GM10248 (cell line): ENCODE measurements at regions of chr10 and their contacts with region 1.

Region 1: GRCh38 chr10:100878291-100878910 is 34.4 kb upstream of the SLF2 start:
- DNase-seq: peak; percentile 68
- CTCF ChIP-seq: peak; percentile 59

Region 2: GRCh38 chr10:100864978-100865377 is 13.4 kb before region 1 on chr10:
- CTCF ChIA-PET with region 1: no interaction called
- POLR2A ChIA-PET with region 1: no interaction called
- DNase-seq: no peak
- CTCF ChIP-seq: no peak

Region 3: DNA sequence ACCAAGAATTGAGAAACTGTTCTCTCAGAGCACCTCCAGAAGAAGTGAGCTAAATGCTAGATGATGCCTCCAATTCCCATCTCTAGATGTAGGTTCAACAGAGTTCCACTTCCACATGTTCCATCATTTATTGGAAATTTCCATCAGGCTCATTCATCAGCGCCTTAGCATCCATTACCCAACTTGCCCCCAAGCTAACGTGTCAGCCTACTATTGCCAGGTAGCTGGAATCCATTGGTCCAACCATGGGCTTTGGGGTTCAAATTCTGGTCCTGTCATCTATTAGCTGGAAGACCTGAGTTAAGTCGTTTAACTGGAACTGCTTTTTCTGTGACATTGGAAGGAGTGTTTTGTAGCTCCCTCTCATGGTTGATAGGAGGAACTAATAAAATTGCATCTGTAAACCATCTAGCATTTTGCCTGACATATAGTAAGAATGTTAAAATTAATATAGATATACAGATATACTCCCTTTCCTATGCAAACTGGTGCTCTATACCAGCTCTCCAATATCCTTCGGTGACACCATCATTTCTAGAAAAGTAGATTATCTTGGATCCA is 10.5 kb after region 1 on chr10:
- CTCF ChIA-PET with region 1: interaction called, 16 read pairs
- POLR2A ChIA-PET with region 1: no interaction called
- DNase-seq: no peak
- CTCF ChIP-seq: peak; percentile 27